ENCODE measurements at regions of chr6 and their contacts with region 1.

Region 1: GRCh38 chr6:142387997-142388815 is 86.4 kb downstream of the ADGRG6 start:
- DNase-seq: peak; percentile 73
- ATAC-seq: peak; percentile 92
- H3K4me3 ChIP-seq: no peak overlapping the region
- H3K27ac ChIP-seq: no peak overlapping the region
- H3K4me1 ChIP-seq: peaks cover 31% of the 10 kb centered on the region
- H3K27me3 ChIP-seq: no peaks in the 10 kb centered on the region
- CTCF ChIP-seq: peak; percentile 76
- EP300 ChIP-seq: no peak
- POLR2A ChIP-seq: no peak
- RAD21 ChIP-seq: peak; percentile 85

Region 2: GRCh38 chr6:142146828-142147662 is 241.2 kb before region 1 on chr6 and contains the starts of genes NMBR and VTA1:
- CTCF ChIA-PET with region 1: interaction called, 5 read pairs
- POLR2A ChIA-PET with region 1: interaction called, 3 read pairs
- in situ Hi-C with region 1: no loop called
- intact Hi-C with region 1: loop called (anchors 2 kb)
- DNase-seq: peak; percentile 100
- ATAC-seq: peak; percentile 100
- H3K4me3 ChIP-seq: peak within 1 kb of the TSS; percentile 79 to 91 (median 81)
- H3K27ac ChIP-seq: peak within 1 kb of the TSS; percentile 63
- H3K4me1 ChIP-seq: peaks cover 30% of the 10 kb centered on the region
- H3K27me3 ChIP-seq: no peaks in the 10 kb centered on the region; a peak in 1 of 5 replicates
- CTCF ChIP-seq: peak; percentile 99
- EP300 ChIP-seq: peak in 1 of 2 experiments; percentile 62; a peak in 2 of 4 replicates
- POLR2A ChIP-seq: peak; percentile 97 to 98
- RAD21 ChIP-seq: peak; percentile 93
- total RNA-seq, gene NMBR: not detected in 2 replicates
- total RNA-seq, gene VTA1: 89.1 and 143 TPM in 2 replicates

Region 3: GRCh38 chr6:142155895-142156757 is 232.1 kb before region 1 on chr6:
- CTCF ChIA-PET with region 1: interaction called, 8 read pairs
- POLR2A ChIA-PET with region 1: no interaction called
- in situ Hi-C with region 1: loop called (anchors 10 kb)
- intact Hi-C with region 1: loop called (anchors 1 kb)
- DNase-seq: peak; percentile 30
- ATAC-seq: peak; percentile 75
- H3K4me3 ChIP-seq: no peak overlapping the region
- H3K27ac ChIP-seq: peak overlapping the region; percentile 1
- H3K4me1 ChIP-seq: peaks cover 6% of the 10 kb centered on the region
- H3K27me3 ChIP-seq: no peaks in the 10 kb centered on the region
- CTCF ChIP-seq: peak; percentile 53
- EP300 ChIP-seq: no peak
- POLR2A ChIP-seq: no peak
- RAD21 ChIP-seq: no peak

Region 4: DNA sequence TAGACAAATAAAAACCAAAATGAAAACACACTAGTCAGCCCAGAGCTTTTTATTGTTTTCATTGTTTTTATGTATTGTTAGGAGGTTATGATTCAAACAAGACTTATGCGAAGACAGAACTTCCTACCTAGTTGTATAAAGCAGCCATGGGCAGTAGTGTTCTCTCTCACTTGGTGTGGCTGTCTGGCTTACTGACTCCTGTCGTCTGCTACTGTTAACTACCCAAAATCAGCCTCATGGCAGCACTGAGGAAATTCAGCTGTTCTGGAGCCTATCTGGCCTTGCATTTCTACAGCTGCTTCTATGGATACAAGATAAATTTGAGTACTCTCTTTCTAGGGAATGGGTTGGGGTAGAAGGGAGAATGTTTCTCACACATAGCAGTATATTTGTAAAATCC is 220.7 kb before region 1 on chr6:
- CTCF ChIA-PET with region 1: no interaction called
- POLR2A ChIA-PET with region 1: no interaction called
- in situ Hi-C with region 1: loop called (anchors 10 kb)
- intact Hi-C with region 1: no loop called
- DNase-seq: no peak
- ATAC-seq: no peak
- H3K4me3 ChIP-seq: no peak overlapping the region
- H3K27ac ChIP-seq: no peak overlapping the region
- H3K4me1 ChIP-seq: peaks cover 13% of the 10 kb centered on the region
- H3K27me3 ChIP-seq: no peaks in the 10 kb centered on the region
- CTCF ChIP-seq: no peak
- EP300 ChIP-seq: no peak
- POLR2A ChIP-seq: no peak
- RAD21 ChIP-seq: no peak

Region 5: GRCh38 chr6:142236691-142237090 is 151.5 kb before region 1 on chr6:
- CTCF ChIA-PET with region 1: interaction called, 32 read pairs
- POLR2A ChIA-PET with region 1: interaction called, 5 read pairs
- in situ Hi-C with region 1: loop called (anchors 5 kb)
- intact Hi-C with region 1: loop called (anchors 1 kb)
- DNase-seq: no peak
- ATAC-seq: no peak
- H3K4me3 ChIP-seq: no peak overlapping the region
- H3K27ac ChIP-seq: no peak overlapping the region
- H3K4me1 ChIP-seq: peaks cover 26% of the 10 kb centered on the region
- H3K27me3 ChIP-seq: no peaks in the 10 kb centered on the region
- CTCF ChIP-seq: no peak
- EP300 ChIP-seq: no peak
- POLR2A ChIP-seq: no peak
- RAD21 ChIP-seq: no peak

Region 6: GRCh38 chr6:142331075-142331551 is 57.1 kb before region 1 on chr6:
- CTCF ChIA-PET with region 1: no interaction called
- POLR2A ChIA-PET with region 1: no interaction called
- in situ Hi-C with region 1: no loop called
- intact Hi-C with region 1: no loop called
- DNase-seq: peak; percentile 100
- ATAC-seq: peak; percentile 97
- H3K4me3 ChIP-seq: peak overlapping the region; percentile 21 to 36 (median 34); a peak in 4 of 6 replicates
- H3K27ac ChIP-seq: peak overlapping the region; percentile 80
- H3K4me1 ChIP-seq: peaks cover 98% of the 10 kb centered on the region
- H3K27me3 ChIP-seq: no peaks in the 10 kb centered on the region
- CTCF ChIP-seq: no peak
- EP300 ChIP-seq: peak; percentile 46 to 99; a peak in 3 of 4 replicates
- POLR2A ChIP-seq: no peak
- RAD21 ChIP-seq: peak; percentile 27; the same call in 1 of the 2 replicates

Region 7: DNA sequence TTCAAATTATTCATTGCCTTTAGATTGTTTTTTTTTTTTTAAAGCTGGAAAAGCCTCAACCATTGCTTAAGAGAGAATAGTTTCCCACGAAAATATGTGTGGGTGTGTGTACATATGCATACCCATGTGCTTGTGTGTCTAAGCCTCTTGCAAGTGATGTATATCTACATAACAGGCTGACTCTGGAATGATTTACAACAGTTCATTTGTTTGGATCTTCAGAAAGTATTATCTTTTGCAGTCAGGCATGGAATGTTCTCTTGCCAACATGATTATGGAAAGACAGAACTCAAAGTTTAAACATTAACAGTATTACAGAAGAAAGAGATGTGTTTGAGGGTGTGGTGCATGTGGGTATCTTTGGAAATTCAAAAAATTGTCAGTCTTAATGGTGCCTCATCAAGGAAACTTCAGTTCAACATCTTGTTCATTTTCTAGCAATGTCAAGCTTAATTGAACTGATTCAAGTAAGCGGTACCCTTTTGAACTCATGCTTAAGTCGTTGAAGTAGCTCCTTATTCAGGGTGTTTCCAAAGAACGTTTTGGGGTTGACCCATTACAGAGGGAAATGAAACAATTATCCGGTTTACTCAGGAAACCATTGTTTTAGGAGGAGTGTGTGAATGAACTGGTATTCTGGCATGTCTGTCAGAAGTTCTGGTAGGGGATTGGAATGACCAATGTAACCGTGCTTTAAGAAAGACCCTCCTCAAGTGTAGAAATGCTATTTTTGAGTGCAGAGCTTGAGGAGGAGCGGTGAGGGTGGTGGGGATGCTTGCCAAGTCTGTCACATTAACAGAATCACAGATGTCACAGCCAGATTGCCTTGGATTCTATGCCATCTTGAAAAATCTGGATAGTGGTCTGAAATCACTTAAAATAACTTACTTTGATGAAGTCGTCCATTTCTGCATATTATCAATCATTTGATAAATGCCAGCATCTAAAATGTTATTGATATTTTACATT is 26.1 kb before region 1 on chr6:
- CTCF ChIA-PET with region 1: no interaction called
- POLR2A ChIA-PET with region 1: no interaction called
- in situ Hi-C with region 1: no loop called
- intact Hi-C with region 1: no loop called
- DNase-seq: peak; percentile 94
- ATAC-seq: peak; percentile 88
- H3K4me3 ChIP-seq: no peak overlapping the region
- H3K27ac ChIP-seq: peak overlapping the region; percentile 13
- H3K4me1 ChIP-seq: peaks cover 53% of the 10 kb centered on the region
- H3K27me3 ChIP-seq: no peaks in the 10 kb centered on the region
- CTCF ChIP-seq: no peak
- EP300 ChIP-seq: peak in 1 of 2 experiments; percentile 51; a peak in 1 of 4 replicates
- POLR2A ChIP-seq: no peak
- RAD21 ChIP-seq: no peak

Region 8: GRCh38 chr6:142570221-142570671 is 182.0 kb after region 1 on chr6:
- CTCF ChIA-PET with region 1: no interaction called
- POLR2A ChIA-PET with region 1: no interaction called
- in situ Hi-C with region 1: no loop called
- intact Hi-C with region 1: no loop called
- DNase-seq: peak; percentile 40
- ATAC-seq: no peak; the same call in 2 of the 3 replicates
- H3K4me3 ChIP-seq: no peak overlapping the region
- H3K27ac ChIP-seq: no peak overlapping the region
- H3K4me1 ChIP-seq: no peaks in the 10 kb centered on the region
- H3K27me3 ChIP-seq: no peaks in the 10 kb centered on the region
- CTCF ChIP-seq: no peak
- EP300 ChIP-seq: no peak
- POLR2A ChIP-seq: no peak
- RAD21 ChIP-seq: no peak